Cardiac septum (tissue), 1 donor: ENCODE measurements at regions of chr9 and their contacts with region 1.

Region 1: DNA sequence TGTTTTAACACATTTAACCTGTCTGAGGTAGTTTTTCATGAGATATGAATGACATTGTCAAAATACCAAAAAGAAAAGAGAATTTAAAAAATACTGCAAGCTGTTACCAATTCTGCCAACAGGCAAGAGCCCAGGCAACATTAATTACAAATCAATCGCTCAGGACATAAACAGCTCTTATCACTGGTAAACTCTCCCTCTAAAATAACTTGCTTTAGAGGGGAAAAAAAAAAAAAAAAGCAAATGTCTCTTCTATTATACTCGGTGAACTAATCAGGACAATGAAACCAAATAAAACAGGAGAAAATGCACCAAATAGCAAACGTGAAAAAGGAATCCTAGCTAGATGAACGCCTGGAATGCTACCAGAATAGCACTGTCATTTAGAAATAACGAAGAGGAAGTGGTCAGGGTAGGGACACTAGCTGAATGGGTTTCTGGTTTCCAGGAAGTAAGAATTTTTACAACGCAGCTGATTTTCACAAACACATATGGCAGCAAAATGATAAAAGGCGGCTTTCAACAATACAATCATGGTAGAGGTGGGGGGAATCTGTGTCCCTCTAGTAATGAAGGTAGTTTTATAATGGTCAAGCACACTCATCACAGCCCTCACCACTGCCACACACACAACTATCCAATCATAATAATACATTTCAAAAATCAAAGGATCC is 94.9 kb downstream of the DENND1A start:
- DNase-seq: no peak

Region 2: DNA sequence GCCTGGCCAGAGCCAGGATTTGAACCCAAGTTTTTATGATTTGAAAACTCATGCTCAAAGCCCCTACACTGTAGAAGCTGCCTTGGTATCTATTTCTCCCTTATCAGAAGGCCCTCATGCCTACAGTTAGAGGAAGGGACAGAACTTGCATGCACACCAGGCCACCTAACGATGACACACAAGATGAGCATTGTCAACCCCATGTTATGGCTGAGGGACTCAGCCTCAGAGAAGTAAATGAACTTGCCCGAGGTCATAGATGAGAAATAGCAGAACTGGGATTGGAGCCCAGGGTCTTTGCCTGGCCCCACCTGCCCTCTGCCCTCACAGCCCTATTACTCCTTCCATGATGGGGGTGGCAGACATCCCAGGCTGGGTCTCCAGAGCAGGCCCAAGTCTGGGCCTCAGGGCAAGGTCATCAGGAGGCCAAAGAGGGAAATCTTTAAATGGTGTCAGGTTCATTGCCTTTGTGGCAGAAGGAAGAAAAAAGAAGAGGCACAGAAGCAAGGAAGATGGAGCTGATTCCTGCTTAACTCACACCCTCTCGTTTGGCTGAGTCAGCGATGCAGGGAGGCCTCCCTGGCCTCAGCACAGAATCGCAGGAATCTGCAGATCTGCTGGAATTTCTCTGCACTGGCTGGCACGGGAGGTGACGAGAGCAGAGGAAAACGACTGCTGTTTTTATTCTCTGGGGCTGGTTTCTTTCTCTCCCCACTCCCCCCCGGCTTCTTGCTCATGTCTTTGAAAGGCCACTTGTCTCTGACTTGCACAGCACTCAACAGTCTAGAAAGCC is 499.6 kb before region 1 on chr9:
- intact Hi-C with region 1: no loop called
- DNase-seq: no peak

Region 3: DNA sequence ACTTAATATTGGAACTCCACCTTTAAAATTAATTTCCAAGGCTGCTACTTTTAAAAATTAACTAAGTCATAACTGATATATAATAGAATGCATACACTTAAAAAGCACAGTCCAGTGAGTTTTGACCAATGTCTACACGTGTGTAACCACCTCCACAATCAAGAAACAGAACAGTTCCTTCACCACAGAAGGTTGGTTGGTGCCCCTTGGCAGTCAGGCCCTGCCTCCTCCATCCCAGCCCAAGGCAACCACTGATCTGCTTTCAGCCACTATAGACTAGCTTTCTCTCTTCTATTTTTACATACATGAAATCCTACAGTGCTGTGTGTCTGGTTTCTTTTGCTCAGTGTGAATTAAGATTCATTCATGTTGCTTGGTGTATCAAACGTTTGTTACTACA is 263.8 kb before region 1 on chr9:
- intact Hi-C with region 1: loop called (anchors 10 kb)
- DNase-seq: no peak

Region 4: GRCh38 chr9:124684169-124684568 is 849.1 kb after region 1 on chr9:
- intact Hi-C with region 1: no loop called
- DNase-seq: no peak